MCF 10A (cell line): ENCODE measurements at regions of chr13 and their contacts with region 1.

Region 1: DNA sequence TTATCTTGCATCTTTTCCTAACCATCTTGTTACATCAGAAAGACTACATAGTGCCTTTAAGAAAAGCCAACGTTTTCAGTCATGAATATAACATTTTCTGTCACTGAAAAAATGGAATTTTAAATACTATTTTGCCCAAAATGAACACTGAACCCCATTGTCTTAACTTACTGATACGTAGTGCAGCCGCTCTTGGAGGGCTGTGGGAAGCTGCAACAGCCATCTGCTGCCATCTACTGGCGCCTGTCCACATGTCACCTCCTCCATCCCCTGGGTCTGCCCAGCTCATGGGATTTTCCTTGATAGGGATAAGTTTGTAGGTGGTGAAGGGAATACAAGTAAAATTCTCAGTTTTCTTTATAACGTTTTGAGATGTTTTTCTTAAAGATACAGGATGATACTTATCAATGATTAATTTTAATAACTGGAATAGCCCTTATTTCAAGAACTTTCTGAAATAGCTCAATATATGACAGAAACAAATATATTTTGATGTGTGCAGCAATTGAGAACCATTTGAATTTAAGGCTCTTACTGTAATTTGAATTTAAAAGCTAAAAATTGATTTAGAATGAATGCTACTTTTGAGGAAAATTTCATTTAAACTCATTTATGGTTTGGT is 73.7 kb downstream of the GGACT start:
- DNase-seq: peak; percentile 74
- H3K4me3 Mint-ChIP-seq: no peak overlapping the region
- H3K27ac Mint-ChIP-seq: no peak overlapping the region
- H3K4me1 Mint-ChIP-seq: peaks cover 12% of the 10 kb centered on the region
- H3K27me3 Mint-ChIP-seq: no peaks in the 10 kb centered on the region
- CTCF ChIP-seq: peak; percentile 95

Region 2: DNA sequence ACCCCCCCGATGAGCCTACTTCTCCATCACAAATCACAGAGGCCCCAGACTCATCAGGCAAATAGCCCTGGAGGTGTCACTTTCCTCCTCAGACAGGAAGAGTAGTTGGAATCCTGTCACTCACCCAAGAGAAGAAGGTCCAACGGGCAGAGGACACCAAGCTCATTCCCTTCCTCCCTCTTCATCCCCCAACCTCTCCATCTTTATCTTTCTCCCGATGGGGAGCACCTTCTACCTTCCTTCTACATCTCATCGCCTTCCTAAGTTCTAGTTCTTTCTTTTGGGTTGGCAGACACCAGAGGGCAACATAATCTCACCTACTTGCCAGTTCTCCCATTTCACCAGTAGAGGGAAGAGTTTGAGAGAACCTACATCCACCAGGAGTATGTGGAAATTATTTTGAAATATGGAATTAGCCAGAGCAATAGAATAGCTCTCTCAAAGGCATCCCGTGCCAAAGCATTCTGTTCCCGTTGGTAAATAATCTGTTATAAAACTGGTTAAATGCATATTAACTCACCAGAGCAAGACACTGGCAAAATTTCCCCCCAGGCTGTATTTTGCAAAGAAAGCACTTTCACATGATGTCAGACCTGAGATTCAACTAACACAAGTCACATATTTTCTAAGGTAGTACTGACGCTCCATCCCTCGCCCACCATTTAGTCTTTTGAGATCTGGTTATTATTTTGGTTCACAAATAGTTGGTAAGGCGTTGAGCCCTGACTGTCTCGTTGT is 598.4 kb before region 1 on chr13:
- CTCF ChIA-PET with region 1: interaction called, 23 read pairs
- POLR2A ChIA-PET with region 1: interaction called, 4 read pairs
- intact Hi-C with region 1: no loop called
- DNase-seq: peak; percentile 86
- H3K4me3 Mint-ChIP-seq: no peak overlapping the region
- H3K27ac Mint-ChIP-seq: no peak overlapping the region
- H3K4me1 Mint-ChIP-seq: peaks cover 6% of the 10 kb centered on the region
- H3K27me3 Mint-ChIP-seq: no peaks in the 10 kb centered on the region
- CTCF ChIP-seq: peak; percentile 91

Region 3: DNA sequence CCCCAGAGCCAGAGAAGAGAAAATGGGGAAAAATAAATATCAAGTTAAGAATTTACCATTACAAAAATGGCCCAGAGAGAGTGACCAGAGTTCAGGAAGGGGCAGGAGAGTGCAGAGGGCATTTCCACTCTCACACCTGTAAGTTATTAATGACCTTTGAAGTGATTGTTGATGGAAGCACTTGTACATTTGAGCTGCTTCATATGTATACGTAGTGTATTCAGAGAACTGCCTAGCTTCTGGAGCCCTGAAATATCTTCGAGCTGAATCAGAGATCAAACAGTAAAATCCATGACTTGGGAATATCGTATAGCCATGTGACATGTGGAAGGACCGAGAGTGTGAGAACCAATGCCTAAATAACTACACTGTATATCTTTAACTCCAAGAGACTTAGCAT is 475.2 kb before region 1 on chr13:
- CTCF ChIA-PET with region 1: interaction called, 4 read pairs
- POLR2A ChIA-PET with region 1: no interaction called
- intact Hi-C with region 1: loop called (anchors 1 kb)
- DNase-seq: no peak
- H3K4me3 Mint-ChIP-seq: no peak overlapping the region
- H3K27ac Mint-ChIP-seq: no peak overlapping the region
- H3K4me1 Mint-ChIP-seq: no peaks in the 10 kb centered on the region
- H3K27me3 Mint-ChIP-seq: no peaks in the 10 kb centered on the region
- CTCF ChIP-seq: no peak

Region 4: DNA sequence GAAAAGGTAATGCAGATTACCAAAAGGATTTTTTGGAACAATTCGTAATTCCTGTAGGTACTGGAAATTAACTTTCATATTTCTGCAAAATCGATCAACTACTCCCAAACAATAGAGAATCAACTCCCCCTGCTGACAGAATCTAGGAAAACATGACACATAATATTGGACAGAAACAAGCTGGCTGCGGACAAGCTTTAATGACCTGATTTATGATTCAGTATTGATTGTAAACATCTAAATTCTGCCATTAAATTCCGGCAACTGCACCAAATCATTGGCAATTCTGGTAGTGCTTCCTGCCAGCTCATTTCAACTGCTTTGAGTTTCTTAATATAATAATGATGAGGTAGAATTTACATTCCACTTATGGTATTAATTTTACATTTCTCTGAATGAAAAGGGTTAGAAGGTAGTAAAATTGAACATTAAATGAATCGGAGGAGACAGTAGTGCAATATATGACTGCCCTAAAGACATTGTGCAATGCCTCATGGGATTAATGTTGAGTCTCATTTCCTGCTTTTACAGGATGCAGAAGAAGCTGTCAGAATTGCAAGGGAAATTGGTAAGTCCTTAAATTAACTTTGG is 279.5 kb before region 1 on chr13:
- CTCF ChIA-PET with region 1: interaction called, 5 read pairs
- POLR2A ChIA-PET with region 1: no interaction called
- intact Hi-C with region 1: loop called (anchors 1 kb)
- DNase-seq: peak; percentile 75
- H3K4me3 Mint-ChIP-seq: peak overlapping the region; percentile 26
- H3K27ac Mint-ChIP-seq: no peak overlapping the region
- H3K4me1 Mint-ChIP-seq: peaks cover 14% of the 10 kb centered on the region
- H3K27me3 Mint-ChIP-seq: no peaks in the 10 kb centered on the region
- CTCF ChIP-seq: peak; percentile 68